Calu3 (cell line): ENCODE measurements at regions of chr2 and their contacts with region 1.

Region 1: DNA sequence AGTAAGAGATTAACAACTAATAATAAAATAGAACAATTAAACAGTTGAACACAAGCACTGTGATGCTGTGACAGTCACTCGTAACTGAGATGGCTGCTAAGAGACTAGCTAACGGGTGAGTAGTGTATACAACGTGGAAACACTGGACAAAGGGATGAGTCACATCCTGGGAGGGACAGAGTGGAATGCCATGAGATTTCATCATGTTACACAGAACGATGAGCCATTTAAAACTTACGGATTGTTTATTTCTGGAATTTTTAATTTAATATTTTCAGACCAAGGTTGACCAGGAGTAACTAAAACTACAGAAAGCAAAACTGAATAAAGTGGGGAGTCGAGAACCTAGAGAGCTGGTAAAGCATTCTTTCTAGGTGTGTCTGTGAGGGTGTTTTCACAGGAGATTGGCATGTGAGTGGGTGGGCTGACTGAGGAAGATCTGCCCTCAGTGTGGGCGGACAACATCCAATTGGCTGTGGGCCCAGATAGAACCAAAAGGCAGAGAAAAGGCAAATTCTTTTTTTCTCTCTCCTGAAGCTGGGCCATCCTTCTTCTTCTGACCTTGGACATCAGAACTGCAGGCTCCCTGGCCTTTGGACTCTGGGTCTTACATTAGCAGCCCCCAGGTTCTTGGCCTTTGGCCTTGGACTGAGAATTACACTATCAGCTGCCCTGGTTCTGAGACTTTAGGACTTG is 14.6 kb downstream of the TMSB10 start:
- DNase-seq: peak; percentile 69
- H3K4me3 Mint-ChIP-seq: peak overlapping the region; percentile 7
- H3K27ac Mint-ChIP-seq: peak overlapping the region; percentile 97
- H3K4me1 Mint-ChIP-seq: peaks cover 29% of the 10 kb centered on the region
- H3K27me3 Mint-ChIP-seq: no peaks in the 10 kb centered on the region
- CTCF ChIP-seq: no peak

Region 2: DNA sequence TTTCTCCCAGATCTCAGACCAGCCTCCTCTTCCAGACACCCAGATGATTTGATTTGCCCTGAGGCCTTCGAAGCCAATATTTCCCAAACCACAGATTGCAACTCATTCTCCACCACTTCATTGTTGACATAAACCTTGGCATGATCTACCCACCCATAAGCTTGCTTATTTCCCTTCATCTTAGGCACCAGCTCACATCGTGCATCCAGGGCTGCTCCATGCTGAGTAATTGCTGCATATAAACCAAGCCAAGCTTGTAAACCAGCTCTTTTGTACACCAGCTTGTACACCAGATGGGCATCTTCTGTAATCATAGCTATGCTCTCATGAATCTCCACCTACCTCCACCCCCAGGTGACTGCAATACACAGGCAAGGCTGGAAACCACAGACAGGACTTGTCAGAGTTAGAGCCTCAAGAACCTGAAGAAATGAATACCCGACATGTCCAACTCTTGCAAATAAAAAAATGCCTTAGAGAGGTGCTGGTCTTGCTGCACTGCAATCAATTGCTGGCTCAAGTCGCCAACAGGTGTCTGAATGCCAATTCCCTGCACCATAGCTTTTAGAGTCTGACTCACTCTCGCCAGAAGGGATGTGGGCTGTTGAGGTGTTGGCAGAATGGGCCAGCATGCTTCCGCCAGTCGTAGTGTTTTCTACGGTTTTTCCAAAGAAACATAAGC is 70.6 kb before region 1 on chr2:
- CTCF ChIA-PET with region 1: no interaction called
- intact Hi-C with region 1: no loop called
- DNase-seq: no peak
- H3K4me3 Mint-ChIP-seq: no peak overlapping the region
- H3K27ac Mint-ChIP-seq: no peak overlapping the region
- H3K4me1 Mint-ChIP-seq: no peaks in the 10 kb centered on the region
- H3K27me3 Mint-ChIP-seq: peaks cover 64% of the 10 kb centered on the region
- CTCF ChIP-seq: no peak

Region 3: DNA sequence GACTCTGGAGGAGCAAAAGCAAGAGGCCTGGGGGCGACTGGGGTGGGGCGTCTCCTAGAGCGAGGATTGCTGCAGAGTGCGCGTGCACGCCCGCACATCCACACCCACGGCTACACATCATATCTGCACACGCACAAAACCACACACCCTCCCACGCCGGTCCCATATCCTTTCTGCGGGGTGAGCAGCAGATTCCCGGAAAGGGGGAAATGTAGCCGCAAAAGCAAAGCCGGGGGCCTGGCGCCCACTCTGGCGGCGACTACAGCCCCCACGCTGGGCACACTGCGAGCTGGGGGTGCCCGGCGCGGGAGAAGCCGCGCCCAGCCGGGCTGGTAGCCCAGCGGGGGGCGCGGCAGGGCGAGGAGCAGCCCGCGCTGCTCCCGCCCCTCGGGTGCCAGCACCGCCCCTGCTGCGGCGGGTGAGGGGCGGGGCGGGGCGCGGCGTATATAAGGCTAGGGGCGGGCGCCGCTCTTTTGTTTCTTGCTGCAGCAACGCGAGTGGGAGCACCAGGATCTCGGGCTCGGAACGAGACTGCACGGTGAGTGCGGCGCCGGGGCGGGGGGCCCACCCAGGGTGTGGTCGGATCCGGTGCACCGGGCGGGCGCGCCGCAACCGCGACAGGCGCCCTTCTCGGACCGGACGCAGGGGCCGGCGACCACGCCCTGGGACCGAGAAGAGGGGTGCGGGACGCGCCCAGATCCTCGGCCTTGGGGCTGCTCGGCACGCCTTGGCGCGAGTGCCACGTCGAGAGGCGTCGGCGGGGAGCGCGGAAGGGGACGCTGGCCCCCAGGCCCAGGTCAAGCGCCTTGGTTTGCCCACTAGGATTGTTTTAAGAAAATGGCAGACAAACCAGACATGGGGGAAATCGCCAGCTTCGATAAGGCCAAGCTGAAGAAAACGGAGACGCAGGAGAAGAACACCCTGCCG is 14.6 kb before region 1 on chr2 and contains the start of gene TMSB10:
- CTCF ChIA-PET with region 1: interaction called, 24 read pairs
- intact Hi-C with region 1: no loop called
- DNase-seq: peak; percentile 92
- H3K4me3 Mint-ChIP-seq: peak within 1 kb of the TSS; percentile 86
- H3K27ac Mint-ChIP-seq: peak within 1 kb of the TSS; percentile 98
- H3K4me1 Mint-ChIP-seq: peaks cover 31% of the 10 kb centered on the region
- H3K27me3 Mint-ChIP-seq: no peaks in the 10 kb centered on the region
- CTCF ChIP-seq: no peak
- total RNA-seq, gene TMSB10: 1,316 and 1,437 TPM in 2 replicates